ENCODE measurements at regions of chr12 and their contacts with region 1.

Region 1: GRCh38 chr12:57865090-57865751 is 18.7 kb upstream of the CTDSP2 start:
- DNase-seq: peak; percentile 54 to 72
- H3K4me3 ChIP-seq: peak overlapping the region; percentile 66
- H3K27ac ChIP-seq: peak overlapping the region; percentile 58
- H3K4me1 ChIP-seq: peaks cover 38% of the 10 kb centered on the region
- H3K27me3 ChIP-seq: no peaks in the 10 kb centered on the region
- CTCF ChIP-seq: no peak

Region 2: DNA sequence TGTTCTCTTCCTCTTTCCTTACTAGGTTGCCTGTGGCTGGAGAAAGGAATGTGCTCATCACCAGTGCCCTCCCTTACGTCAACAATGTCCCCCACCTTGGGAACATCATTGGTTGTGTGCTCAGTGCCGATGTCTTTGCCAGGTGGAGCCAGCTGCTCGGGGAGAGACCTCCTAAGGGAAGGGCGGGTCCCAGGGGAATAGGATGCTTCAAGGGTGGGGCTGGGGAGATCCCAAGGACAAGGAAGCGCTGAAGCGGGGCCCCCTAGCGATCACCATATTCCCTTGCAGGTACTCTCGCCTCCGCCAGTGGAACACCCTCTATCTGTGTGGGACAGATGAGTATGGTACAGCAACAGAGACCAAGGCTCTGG is 367.1 kb before region 1 on chr12:
- CTCF ChIA-PET with region 1: no interaction called
- POLR2A ChIA-PET with region 1: no interaction called
- intact Hi-C with region 1: no loop called
- DNase-seq: no peak
- H3K4me3 ChIP-seq: no peak overlapping the region
- H3K27ac ChIP-seq: no peak overlapping the region
- H3K4me1 ChIP-seq: no peaks in the 10 kb centered on the region
- H3K27me3 ChIP-seq: no peaks in the 10 kb centered on the region
- CTCF ChIP-seq: no peak

Region 3: GRCh38 chr12:58547217-58547616 is 682.0 kb after region 1 on chr12:
- CTCF ChIA-PET with region 1: no interaction called
- POLR2A ChIA-PET with region 1: interaction called, 11 read pairs
- intact Hi-C with region 1: no loop called
- DNase-seq: no peak
- H3K4me3 ChIP-seq: no peak overlapping the region
- H3K27ac ChIP-seq: no peak overlapping the region
- H3K4me1 ChIP-seq: no peaks in the 10 kb centered on the region
- H3K27me3 ChIP-seq: no peaks in the 10 kb centered on the region
- CTCF ChIP-seq: no peak